IMR-90 (cell line): ENCODE measurements at regions of chr14 and their contacts with region 1.

Region 1: GRCh38 chr14:35020713-35021112 is 25.4 kb upstream of the FAM177A1 start:
- DNase-seq: no peak
- ATAC-seq: no peak
- H3K4me3 ChIP-seq: no peak overlapping the region
- H3K27ac ChIP-seq: no peak overlapping the region
- H3K4me1 ChIP-seq: no peaks in the 10 kb centered on the region
- H3K27me3 ChIP-seq: no peaks in the 10 kb centered on the region
- CTCF ChIP-seq: no peak
- POLR2A ChIP-seq: no peak
- RAD21 ChIP-seq: no peak

Region 2: DNA sequence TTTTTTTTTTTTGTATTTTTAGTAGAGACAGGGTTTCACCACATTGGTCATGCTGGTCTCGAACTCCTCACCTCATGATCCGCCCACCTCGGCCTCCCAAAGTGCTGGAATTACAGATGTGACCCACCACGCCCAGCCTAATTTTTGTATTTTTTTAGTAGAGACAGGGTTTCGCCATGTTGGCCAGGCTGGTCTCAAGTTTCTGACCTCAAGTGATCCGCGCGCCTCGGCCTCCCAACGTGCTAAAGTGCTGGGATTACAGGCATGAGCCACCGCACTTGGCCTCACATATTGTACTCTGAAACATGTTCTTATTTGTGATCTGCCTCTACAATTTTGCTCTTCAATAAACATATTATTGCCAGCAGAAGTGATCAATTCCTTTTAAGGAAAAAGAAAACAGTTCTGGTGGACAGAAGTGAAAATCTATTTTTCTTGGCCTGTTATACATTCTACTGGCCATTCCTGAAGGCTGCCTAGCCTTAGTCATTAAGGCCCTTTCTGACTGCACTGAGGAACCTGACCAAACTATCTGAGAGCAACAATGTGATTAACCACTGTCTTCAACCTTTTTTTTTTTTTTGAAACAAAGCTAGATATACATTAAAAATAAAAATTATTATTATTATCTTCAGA is 426.9 kb before region 1 on chr14:
- CTCF ChIA-PET with region 1: no interaction called
- POLR2A ChIA-PET with region 1: no interaction called
- dilution Hi-C with region 1: no loop called
- in situ Hi-C with region 1: no loop called
- intact Hi-C with region 1: loop called (anchors 10 kb)
- DNase-seq: peak; percentile 83
- ATAC-seq: peak; percentile 82
- H3K4me3 ChIP-seq: no peak overlapping the region
- H3K27ac ChIP-seq: peak overlapping the region; percentile 87; the same call in 1 of the 2 replicates
- H3K4me1 ChIP-seq: no peaks in the 10 kb centered on the region
- H3K27me3 ChIP-seq: no peaks in the 10 kb centered on the region
- CTCF ChIP-seq: no peak
- POLR2A ChIP-seq: no peak
- RAD21 ChIP-seq: no peak

Region 3: DNA sequence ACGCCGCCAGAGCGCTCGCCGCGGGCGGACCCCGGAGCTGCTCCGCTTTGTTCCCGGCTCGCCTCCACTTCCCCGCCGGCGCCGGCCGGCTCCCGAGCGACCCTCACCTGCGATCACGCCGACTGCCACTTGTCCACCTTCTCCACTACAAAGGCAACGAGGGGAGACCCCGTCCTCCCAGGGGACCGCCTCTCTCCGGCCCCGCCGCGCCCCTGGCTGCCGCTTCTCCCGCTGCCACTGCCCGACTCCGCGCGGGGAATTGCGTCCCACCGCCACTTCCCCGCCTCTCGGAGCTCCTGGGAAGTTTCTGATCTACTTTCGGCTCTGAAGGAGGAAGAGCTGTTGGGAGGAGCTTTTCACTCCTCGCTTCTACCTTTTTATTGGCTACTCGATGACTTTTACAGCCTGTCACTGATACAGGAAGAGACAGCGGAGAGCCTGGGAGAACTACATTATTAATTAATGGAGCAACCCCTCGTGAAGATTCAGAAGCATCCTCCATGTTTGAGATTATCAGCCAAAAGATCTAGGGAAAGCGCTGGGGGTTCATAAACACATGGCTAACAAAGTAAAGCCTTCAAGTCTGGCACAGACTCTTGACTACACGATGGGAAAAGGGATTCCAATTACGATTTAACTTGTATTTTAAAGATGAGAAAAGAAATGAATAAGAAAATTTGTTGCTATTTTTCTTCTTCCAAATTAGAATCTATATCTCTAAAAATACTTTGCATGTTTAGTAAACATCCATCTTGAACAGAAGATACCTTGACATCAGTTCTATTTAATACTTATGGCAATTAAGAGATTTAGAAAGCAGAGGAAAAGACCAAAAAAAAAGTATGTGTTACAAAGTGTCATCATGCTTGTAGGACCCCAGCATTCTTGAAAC is 145.4 kb before region 1 on chr14 and contains the start of gene BAZ1A:
- CTCF ChIA-PET with region 1: no interaction called
- POLR2A ChIA-PET with region 1: interaction called, 13 read pairs
- dilution Hi-C with region 1: no loop called
- in situ Hi-C with region 1: no loop called
- intact Hi-C with region 1: no loop called
- DNase-seq: peak; percentile 91
- ATAC-seq: peak; percentile 81
- H3K4me3 ChIP-seq: peak within 1 kb of the TSS; percentile 96
- H3K27ac ChIP-seq: peak within 1 kb of the TSS; percentile 97
- H3K4me1 ChIP-seq: peaks cover 2% of the 10 kb centered on the region; the same call in 1 of the 2 replicates
- H3K27me3 ChIP-seq: no peaks in the 10 kb centered on the region
- CTCF ChIP-seq: 0 out of 2 replicates have a peak, but pooled peaks have one; percentile 8
- POLR2A ChIP-seq: peak; percentile 91
- RAD21 ChIP-seq: peak; percentile 9; the same call in 1 of the 2 replicates
- total RNA-seq, gene BAZ1A: 23.8 and 43.6 TPM in 2 replicates

Region 4: GRCh38 chr14:34951271-34951670 is 69.4 kb before region 1 on chr14:
- CTCF ChIA-PET with region 1: no interaction called
- POLR2A ChIA-PET with region 1: no interaction called
- dilution Hi-C with region 1: no loop called
- in situ Hi-C with region 1: no loop called
- intact Hi-C with region 1: loop called (anchors 2 kb)
- DNase-seq: peak; percentile 71
- ATAC-seq: peak; percentile 84
- H3K4me3 ChIP-seq: no peak overlapping the region
- H3K27ac ChIP-seq: no peak overlapping the region; the same call in 1 of the 2 replicates
- H3K4me1 ChIP-seq: peaks cover 2% of the 10 kb centered on the region; the same call in 1 of the 2 replicates
- H3K27me3 ChIP-seq: no peaks in the 10 kb centered on the region
- CTCF ChIP-seq: no peak
- POLR2A ChIP-seq: no peak
- RAD21 ChIP-seq: no peak

Region 5: DNA sequence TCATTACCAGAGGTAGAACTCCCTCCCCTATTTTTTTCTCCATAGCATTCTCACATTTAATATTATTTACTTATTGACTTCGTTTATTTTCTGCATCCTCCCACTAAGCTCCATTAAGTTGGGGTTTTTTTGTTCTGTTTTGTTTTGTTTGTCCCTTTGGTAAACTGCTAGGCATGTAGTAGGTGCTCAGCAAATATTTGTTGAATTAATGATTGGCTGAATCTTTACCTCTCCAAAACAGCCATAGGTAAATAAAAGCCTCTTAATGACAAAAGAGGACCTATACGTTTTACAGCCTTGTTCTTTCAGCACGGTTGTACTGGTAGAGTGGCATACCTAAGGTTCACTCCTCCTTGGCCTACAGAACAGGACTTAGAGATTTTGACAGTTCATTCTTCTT is 153.6 kb after region 1 on chr14:
- CTCF ChIA-PET with region 1: no interaction called
- POLR2A ChIA-PET with region 1: no interaction called
- dilution Hi-C with region 1: no loop called
- in situ Hi-C with region 1: no loop called
- intact Hi-C with region 1: no loop called
- DNase-seq: no peak
- ATAC-seq: no peak
- H3K4me3 ChIP-seq: no peak overlapping the region
- H3K27ac ChIP-seq: no peak overlapping the region
- H3K4me1 ChIP-seq: no peaks in the 10 kb centered on the region
- H3K27me3 ChIP-seq: no peaks in the 10 kb centered on the region
- CTCF ChIP-seq: no peak
- POLR2A ChIP-seq: no peak
- RAD21 ChIP-seq: no peak